MCF 10A (cell line): ENCODE measurements at regions of chr15 and their contacts with region 1.

Region 1: GRCh38 chr15:59255647-59256380 is 49.2 kb downstream of the LDHAL6B start:
- DNase-seq: no peak
- H3K4me3 Mint-ChIP-seq: no peak overlapping the region
- H3K27ac Mint-ChIP-seq: no peak overlapping the region
- H3K4me1 Mint-ChIP-seq: peaks cover 10% of the 10 kb centered on the region
- H3K27me3 Mint-ChIP-seq: no peaks in the 10 kb centered on the region
- CTCF ChIP-seq: no peak

Region 2: DNA sequence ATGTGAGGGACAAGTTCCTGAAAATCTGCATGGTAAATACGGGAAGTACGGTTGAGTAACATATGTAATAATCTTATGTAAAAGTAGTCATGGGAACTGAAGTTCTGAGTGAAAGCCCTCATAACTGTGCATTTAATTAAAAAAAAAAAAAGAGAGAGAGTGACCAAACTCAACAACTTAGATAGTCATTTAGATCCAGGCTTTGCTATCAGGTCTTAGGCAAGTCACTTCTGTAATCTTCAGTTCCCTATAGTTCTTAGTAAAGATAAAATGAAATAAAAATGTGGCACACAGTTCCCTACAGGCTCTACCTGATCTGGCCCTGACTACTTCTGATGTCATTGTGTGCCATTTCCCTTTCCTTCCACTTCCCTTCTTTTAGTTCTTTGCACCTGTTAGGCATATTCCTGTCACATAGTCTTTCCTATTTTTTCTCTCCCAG is 253.4 kb before region 1 on chr15:
- CTCF ChIA-PET with region 1: no interaction called
- POLR2A ChIA-PET with region 1: no interaction called
- intact Hi-C with region 1: no loop called
- DNase-seq: no peak
- H3K4me3 Mint-ChIP-seq: no peak overlapping the region
- H3K27ac Mint-ChIP-seq: no peak overlapping the region
- H3K4me1 Mint-ChIP-seq: peaks cover 12% of the 10 kb centered on the region
- H3K27me3 Mint-ChIP-seq: no peaks in the 10 kb centered on the region
- CTCF ChIP-seq: no peak

Region 3: DNA sequence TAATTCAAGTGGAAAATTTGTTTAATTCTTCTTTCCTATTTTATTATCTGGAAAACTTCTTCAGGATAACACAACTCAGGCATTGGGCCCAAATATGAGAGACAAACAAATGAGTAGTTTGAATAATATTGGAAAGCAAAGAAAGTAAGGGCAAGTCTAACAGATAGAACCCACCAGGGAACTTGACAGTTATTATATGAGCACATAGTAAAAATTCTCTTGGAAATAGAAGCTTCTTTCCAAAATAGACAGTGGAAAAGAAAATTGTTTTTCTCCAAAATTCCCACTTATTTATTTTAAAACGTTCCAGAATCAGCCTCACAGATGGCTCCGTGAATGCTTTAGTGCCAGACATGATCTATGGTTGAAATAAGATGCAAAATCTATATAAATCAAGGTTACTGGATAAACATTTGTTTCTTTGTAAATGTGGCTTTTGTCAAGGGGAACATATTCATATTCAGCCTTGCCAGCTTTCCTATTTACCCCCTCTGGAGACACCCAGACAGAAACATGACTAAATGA is 25.2 kb before region 1 on chr15:
- CTCF ChIA-PET with region 1: interaction called, 3 read pairs
- POLR2A ChIA-PET with region 1: interaction called, 3 read pairs
- intact Hi-C with region 1: loop called (anchors 1 kb)
- DNase-seq: no peak
- H3K4me3 Mint-ChIP-seq: no peak overlapping the region
- H3K27ac Mint-ChIP-seq: no peak overlapping the region
- H3K4me1 Mint-ChIP-seq: peaks cover 18% of the 10 kb centered on the region
- H3K27me3 Mint-ChIP-seq: no peaks in the 10 kb centered on the region
- CTCF ChIP-seq: no peak